ENCODE measurements at regions of chr5 and their contacts with region 1.

Region 1: DNA sequence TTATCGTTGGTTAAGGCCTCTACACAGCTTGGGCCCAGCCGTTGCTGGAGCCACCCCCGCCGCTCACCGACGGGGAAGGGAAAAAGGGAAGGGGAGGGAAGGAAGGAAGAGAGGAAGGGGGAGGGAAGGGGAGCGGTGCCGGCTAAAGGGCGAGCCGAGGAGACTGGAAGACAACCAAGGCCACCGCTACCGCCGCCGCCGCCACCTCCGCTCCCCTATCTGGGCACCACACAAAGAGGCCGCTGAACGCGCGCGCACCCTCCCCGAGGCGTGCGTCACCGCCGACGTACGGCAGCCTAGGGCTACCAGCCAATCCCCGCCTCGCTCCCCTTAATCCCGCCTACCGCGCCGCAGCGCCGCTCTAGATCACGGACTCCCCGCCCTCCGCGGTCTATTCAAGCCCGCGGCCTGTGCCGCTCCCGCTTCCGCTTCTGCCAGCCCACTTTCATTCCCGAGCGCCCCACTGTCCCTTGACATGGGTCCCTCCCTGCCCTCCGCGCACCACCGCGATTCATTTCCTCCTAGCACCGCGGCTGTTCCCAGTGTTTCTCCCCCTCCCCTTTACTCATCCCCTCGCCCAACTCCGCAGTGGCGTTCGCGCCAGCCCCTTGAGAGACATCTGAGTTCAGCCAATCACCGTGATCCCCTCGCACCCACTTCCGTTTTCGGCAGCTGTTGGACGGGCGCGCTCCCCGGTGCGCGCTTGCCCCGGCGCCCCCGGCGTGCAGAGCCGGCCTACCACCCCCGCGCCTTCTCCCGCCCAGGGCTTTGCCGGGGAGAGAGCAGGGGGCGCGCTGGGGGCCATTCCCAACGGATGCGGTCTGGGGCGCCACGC is at the start of gene HNRNPA0:
- DNase-seq: peak; percentile 95
- H3K4me3 ChIP-seq: peak within 1 kb of the TSS; percentile 62 to 92 (median 86)
- H3K27ac ChIP-seq: peak within 1 kb of the TSS; percentile 97
- H3K4me1 ChIP-seq: peaks cover 15% of the 10 kb centered on the region
- H3K27me3 ChIP-seq: no peaks in the 10 kb centered on the region
- CTCF ChIP-seq: no peak
- total RNA-seq, gene HNRNPA0: 15.8 to 22.2 TPM

Region 2: GRCh38 chr5:137320056-137321045 is 434.0 kb before region 1 on chr5:
- CTCF ChIA-PET with region 1: no interaction called
- dilution Hi-C with region 1: no loop called
- in situ Hi-C with region 1: no loop called
- intact Hi-C with region 1: no loop called
- DNase-seq: peak; percentile 66
- H3K4me3 ChIP-seq: no peak overlapping the region
- H3K27ac ChIP-seq: no peak overlapping the region
- H3K4me1 ChIP-seq: peaks cover 6% of the 10 kb centered on the region
- H3K27me3 ChIP-seq: no peaks in the 10 kb centered on the region
- CTCF ChIP-seq: peak; percentile 84 to 85

Region 3: GRCh38 chr5:137696481-137696880 is 57.9 kb before region 1 on chr5:
- CTCF ChIA-PET with region 1: no interaction called
- dilution Hi-C with region 1: no loop called
- in situ Hi-C with region 1: no loop called
- intact Hi-C with region 1: no loop called
- DNase-seq: no peak
- H3K4me3 ChIP-seq: no peak overlapping the region
- H3K27ac ChIP-seq: no peak overlapping the region
- H3K4me1 ChIP-seq: no peaks in the 10 kb centered on the region
- H3K27me3 ChIP-seq: no peaks in the 10 kb centered on the region
- CTCF ChIP-seq: no peak

Region 4: DNA sequence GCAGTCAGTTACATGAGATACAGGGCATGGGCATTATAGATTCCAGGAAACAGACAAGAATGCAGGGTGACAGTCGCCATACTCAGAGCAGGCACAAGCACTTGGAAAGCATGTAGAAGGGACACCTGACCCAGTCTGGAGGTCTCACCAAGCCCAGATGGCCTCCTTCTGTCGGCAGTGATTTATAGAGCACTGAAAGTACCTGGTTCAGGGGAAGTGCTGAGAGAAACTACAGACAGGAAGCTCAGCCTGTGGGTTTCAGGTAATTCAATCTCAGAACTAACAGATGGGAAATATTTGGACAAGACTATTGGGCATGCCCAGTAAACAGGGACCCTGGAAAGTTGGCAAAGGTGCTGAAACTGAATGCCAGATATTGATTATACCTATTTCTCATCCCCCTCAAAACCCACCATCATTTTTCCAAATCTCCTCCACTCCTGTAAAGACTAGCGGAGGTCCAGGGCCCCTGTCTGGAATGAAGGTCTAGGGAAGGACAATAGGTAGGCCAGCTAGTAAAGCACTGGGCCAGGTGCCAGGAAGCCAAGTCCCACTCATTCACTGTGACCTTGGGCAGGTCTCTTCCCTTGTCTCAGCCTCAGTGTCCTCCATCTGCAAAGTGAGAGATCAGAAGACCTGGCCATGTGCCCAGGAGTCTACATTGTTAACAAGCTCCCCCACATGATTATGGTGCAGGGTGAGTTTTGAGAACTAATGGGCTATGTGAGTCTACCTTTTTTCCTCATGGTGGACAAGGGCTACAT is 45.4 kb before region 1 on chr5:
- CTCF ChIA-PET with region 1: no interaction called
- dilution Hi-C with region 1: no loop called
- in situ Hi-C with region 1: no loop called
- intact Hi-C with region 1: no loop called
- DNase-seq: no peak
- H3K4me3 ChIP-seq: no peak overlapping the region
- H3K27ac ChIP-seq: no peak overlapping the region
- H3K4me1 ChIP-seq: no peaks in the 10 kb centered on the region
- H3K27me3 ChIP-seq: no peaks in the 10 kb centered on the region
- CTCF ChIP-seq: no peak

Region 5: GRCh38 chr5:137730336-137730735 is 24.0 kb before region 1 on chr5:
- CTCF ChIA-PET with region 1: interaction called, 19 read pairs
- dilution Hi-C with region 1: no loop called
- in situ Hi-C with region 1: no loop called
- intact Hi-C with region 1: no loop called
- DNase-seq: peak; percentile 87
- H3K4me3 ChIP-seq: no peak overlapping the region
- H3K27ac ChIP-seq: no peak overlapping the region
- H3K4me1 ChIP-seq: peaks cover 17% of the 10 kb centered on the region
- H3K27me3 ChIP-seq: no peaks in the 10 kb centered on the region
- CTCF ChIP-seq: no peak

Region 6: DNA sequence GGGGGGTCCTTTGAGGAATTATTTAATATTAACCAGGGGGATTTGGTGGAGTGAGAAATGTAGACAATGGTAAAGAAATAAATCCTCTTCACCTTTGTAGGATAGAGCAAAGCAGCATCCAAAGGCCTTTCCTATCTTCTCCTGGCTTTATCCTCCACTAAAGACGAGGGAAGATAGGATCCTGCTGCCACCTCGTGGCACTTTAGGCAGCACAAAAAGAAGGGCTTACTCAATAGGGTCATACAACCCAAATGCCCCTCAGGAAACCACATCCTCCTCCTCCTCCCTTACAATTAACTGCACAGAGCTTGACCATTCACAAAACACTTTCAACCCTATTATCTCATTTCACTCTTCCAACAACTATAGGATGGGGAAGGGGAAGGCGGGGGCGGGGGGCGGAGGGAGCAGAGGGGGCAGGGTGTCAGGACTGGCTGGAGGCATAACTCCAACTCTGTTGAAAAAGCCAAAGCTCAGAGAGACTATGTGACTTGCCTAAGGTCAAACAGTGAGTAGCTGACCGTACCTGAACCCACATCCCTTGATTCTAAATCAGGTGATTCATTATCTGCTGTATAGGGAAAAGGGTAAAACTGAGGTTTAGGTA is 67.9 kb after region 1 on chr5:
- CTCF ChIA-PET with region 1: no interaction called
- dilution Hi-C with region 1: no loop called
- in situ Hi-C with region 1: no loop called
- intact Hi-C with region 1: loop called (anchors 2 kb)
- DNase-seq: peak; percentile 28
- H3K4me3 ChIP-seq: no peak overlapping the region
- H3K27ac ChIP-seq: no peak overlapping the region
- H3K4me1 ChIP-seq: no peaks in the 10 kb centered on the region
- H3K27me3 ChIP-seq: no peaks in the 10 kb centered on the region
- CTCF ChIP-seq: peak; percentile 37 to 68

Region 7: DNA sequence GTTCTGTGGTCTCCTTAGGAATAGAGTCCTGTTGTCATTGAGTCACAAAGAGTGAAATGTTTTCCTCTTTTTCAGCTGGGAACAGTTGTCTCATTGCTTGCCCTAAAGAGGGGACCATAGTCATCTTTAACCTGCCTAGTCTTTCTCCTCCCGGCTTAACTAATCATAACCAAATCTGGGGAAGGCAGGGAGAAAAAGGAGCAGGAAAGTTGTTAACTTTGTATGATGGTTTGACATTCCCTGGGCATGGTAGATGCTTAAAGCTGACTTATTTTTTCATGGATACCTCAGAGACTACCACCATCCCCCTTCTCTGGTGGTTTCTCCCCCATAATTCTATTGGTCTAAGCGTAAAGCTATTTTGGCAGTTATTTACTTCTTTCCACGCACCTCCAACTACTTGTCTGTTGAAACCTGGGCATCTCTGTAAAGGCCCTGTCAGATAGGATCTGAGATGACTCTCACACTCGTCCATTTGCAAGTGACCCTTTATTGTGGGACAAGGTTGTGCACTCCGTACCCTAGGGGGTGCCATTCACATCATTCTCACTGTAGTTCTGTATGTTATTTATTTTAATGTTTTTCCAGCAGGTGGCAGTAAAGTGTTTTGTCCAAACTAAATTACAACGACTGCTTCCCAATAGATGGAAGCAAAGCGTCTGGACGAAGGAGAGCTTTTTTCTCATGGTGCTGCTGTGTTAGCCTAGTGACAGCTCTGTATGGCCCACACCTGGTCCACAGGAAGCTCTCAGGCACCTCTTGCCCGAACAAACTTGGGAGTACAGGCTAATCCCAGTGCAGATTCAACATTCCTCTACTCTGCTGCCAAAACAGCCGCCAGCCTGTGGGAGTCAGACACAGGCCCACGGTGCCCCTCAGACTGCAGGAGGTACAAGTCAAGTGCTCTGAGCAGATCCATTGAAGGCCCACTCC is 281.5 kb after region 1 on chr5:
- CTCF ChIA-PET with region 1: no interaction called
- dilution Hi-C with region 1: no loop called
- in situ Hi-C with region 1: loop called in 1 of 2 experiments (anchors 25 kb)
- intact Hi-C with region 1: loop called (anchors 5 kb)
- DNase-seq: peak; percentile 77
- H3K4me3 ChIP-seq: no peak overlapping the region
- H3K27ac ChIP-seq: no peak overlapping the region
- H3K4me1 ChIP-seq: peaks cover 10% of the 10 kb centered on the region
- H3K27me3 ChIP-seq: no peaks in the 10 kb centered on the region
- CTCF ChIP-seq: peak; percentile 83 to 88

Region 8: DNA sequence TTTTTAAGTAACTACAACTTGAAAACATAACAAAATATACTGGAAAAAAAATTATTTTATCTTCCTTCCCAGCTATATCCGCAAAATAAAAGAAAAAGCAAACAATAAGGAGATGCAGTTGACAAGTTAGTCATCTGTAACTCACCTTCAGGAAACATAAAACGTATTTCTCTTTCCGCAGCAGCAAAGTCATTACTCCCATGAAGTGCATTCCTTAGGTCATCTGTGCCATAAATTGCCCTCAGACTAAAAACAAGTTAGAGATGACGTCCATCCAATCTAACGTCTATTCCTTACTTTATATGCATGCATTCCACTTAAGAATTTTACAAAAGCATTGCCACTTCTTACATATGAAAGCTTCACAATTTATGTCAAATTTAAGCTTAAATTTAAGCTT is 374.0 kb after region 1 on chr5:
- CTCF ChIA-PET with region 1: interaction called, 3 read pairs
- dilution Hi-C with region 1: no loop called
- in situ Hi-C with region 1: no loop called
- intact Hi-C with region 1: loop called (anchors 2 kb)
- DNase-seq: no peak
- H3K4me3 ChIP-seq: no peak overlapping the region
- H3K27ac ChIP-seq: no peak overlapping the region
- H3K4me1 ChIP-seq: no peaks in the 10 kb centered on the region
- H3K27me3 ChIP-seq: no peaks in the 10 kb centered on the region
- CTCF ChIP-seq: no peak

Measured in mammary epithelial cell (primary cell).